ENCODE measurements at regions of chr9 and their contacts with region 1.

Region 1: GRCh38 chr9:119289740-119290433 is 79.3 kb downstream of the BRINP1 start:
- DNase-seq: peak; percentile 67
- H3K4me3 ChIP-seq: no peak overlapping the region
- H3K27ac ChIP-seq: no peak overlapping the region
- H3K4me1 ChIP-seq: no peaks in the 10 kb centered on the region
- H3K27me3 ChIP-seq: no peaks in the 10 kb centered on the region
- CTCF ChIP-seq: peak; percentile 56 to 84 (median 77)
- POLR2A ChIP-seq: no peak

Region 2: GRCh38 chr9:118510711-118511110 is 779.2 kb before region 1 on chr9:
- intact Hi-C with region 1: no loop called
- DNase-seq: no peak
- H3K4me3 ChIP-seq: no peak overlapping the region
- H3K27ac ChIP-seq: no peak overlapping the region
- H3K4me1 ChIP-seq: no peaks in the 10 kb centered on the region
- H3K27me3 ChIP-seq: no peaks in the 10 kb centered on the region
- CTCF ChIP-seq: no peak
- POLR2A ChIP-seq: no peak

Region 3: GRCh38 chr9:118829334-118829733 is 460.6 kb before region 1 on chr9:
- intact Hi-C with region 1: loop called (anchors 10 kb)
- DNase-seq: no peak
- H3K4me3 ChIP-seq: no peak overlapping the region
- H3K27ac ChIP-seq: no peak overlapping the region
- H3K4me1 ChIP-seq: no peaks in the 10 kb centered on the region
- H3K27me3 ChIP-seq: no peaks in the 10 kb centered on the region
- CTCF ChIP-seq: peak in 3 of 4 experiments; percentile 32 to 50 (median 38)
- POLR2A ChIP-seq: no peak

Region 4: DNA sequence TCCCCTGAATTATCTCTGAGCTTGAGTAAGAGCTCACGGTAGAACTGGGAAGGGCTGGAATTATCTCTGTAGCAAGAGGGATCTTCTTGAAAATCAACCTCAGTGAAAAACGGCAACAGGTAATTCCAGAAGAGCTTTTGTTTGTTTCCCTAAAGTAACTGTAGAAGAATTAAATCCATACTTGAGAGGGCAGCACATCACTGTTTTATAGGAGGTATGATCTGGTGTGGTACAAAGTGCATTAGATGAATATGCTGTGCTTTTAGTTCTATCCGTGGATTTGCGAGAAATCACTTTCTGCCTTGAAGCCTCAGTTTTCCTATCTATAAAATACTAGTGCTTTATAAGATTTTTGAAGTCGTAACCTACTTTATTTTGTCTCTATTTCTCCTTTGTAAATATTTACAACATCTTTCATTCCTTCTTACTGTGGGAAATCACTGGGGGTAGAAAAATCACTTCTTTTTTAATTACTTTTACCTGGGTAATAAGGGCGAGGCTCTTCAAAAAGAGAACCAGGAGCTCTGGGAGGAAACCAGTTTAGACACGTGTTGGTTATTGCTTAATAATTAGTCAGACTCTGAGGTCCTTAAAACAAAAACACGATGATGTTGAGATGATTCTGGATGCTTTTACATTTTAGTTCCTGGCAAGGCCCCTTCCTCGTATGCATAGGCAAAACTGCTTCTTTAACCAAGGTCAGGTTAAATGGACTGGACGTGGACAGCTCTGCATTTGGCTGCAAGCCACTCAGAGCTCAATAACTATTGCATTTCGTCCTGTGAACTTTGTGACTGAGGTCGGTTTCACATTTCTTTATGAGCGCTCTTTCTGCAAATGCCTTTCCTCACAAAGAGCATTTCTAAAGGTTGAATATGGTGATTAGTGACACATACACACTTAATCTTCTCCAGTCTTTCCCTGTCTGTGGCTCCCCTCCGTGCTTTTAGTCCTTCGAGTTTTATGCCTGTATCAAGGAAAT is 296.8 kb before region 1 on chr9:
- intact Hi-C with region 1: loop called (anchors 10 kb)
- DNase-seq: no peak
- H3K4me3 ChIP-seq: no peak overlapping the region
- H3K27ac ChIP-seq: no peak overlapping the region
- H3K4me1 ChIP-seq: no peaks in the 10 kb centered on the region
- H3K27me3 ChIP-seq: no peaks in the 10 kb centered on the region
- CTCF ChIP-seq: peak in 1 of 4 experiments; percentile 32
- POLR2A ChIP-seq: no peak